A673 (cell line): ENCODE measurements at regions of chr10 and their contacts with region 1.

Region 1: DNA sequence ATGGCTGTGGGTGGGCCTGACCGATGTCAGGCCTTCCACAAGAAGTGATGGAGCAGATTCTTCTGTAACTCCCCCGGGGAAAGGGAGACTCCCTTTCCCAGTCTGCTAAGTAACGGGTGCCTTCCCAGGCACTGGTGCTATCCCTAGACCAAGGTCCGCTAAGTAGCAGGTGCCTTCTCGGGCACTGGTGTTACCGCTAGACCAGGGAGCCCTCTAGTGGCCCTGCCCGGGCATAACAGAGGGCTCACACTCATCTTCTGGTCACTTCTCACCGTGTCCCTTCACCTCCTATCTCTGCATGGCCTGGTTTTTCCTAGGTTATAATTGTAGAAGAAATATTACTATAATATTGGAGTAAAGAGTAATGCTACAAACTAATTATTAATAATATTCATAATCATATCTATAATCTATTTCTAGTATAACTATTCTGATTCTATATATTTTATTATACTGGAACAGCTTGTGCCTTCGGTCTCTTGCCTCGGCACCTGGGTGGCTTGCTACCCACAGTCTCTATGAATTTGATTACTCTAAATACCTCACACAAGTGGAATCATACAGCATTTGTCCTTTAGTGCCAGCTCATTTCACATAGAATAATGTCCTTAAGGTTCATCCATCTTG is 1378.7 kb downstream of the XPNPEP1 start:
- DNase-seq: peak; percentile 67
- H3K4me3 ChIP-seq: no peak overlapping the region
- H3K27ac ChIP-seq: no peak overlapping the region
- H3K4me1 ChIP-seq: no peaks in the 10 kb centered on the region
- H3K27me3 ChIP-seq: no peaks in the 10 kb centered on the region
- CTCF ChIP-seq: peak; percentile 89

Region 2: GRCh38 chr10:106705681-106706100 is 1838.9 kb before region 1 on chr10:
- CTCF ChIA-PET with region 1: no interaction called
- POLR2A ChIA-PET with region 1: no interaction called
- intact Hi-C with region 1: loop called (anchors 10 kb)
- DNase-seq: peak; percentile 81
- H3K4me3 ChIP-seq: no peak overlapping the region
- H3K27ac ChIP-seq: no peak overlapping the region
- H3K4me1 ChIP-seq: no peaks in the 10 kb centered on the region
- H3K27me3 ChIP-seq: no peaks in the 10 kb centered on the region
- CTCF ChIP-seq: peak; percentile 93

Region 3: DNA sequence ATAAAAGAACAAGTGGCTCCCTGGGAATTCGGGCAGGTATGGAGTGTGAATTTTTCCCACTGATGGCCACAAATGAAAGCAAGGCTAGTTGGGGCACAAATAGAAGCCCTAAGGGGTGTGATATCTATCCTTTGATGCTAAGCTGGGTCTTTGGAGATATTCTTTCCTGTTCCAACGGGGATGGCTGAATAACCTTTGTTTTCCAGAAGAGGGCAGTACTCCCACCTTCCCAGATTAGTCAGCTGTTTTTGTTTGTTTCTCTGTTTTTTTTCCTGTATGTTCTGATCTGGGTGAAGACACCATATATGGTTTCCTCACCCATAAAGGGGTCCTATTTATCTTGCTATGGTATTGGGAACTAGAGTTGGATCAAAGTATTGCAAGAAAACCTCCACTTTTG is 432.4 kb before region 1 on chr10:
- CTCF ChIA-PET with region 1: no interaction called
- POLR2A ChIA-PET with region 1: no interaction called
- intact Hi-C with region 1: loop called (anchors 1 kb)
- DNase-seq: peak; percentile 34
- H3K4me3 ChIP-seq: no peak overlapping the region
- H3K27ac ChIP-seq: no peak overlapping the region
- H3K4me1 ChIP-seq: no peaks in the 10 kb centered on the region
- H3K27me3 ChIP-seq: no peaks in the 10 kb centered on the region
- CTCF ChIP-seq: peak; percentile 64

Region 4: GRCh38 chr10:108204479-108205305 is 339.9 kb before region 1 on chr10:
- CTCF ChIA-PET with region 1: no interaction called
- POLR2A ChIA-PET with region 1: no interaction called
- intact Hi-C with region 1: loop called (anchors 5 kb)
- DNase-seq: peak; percentile 62
- H3K4me3 ChIP-seq: no peak overlapping the region
- H3K27ac ChIP-seq: no peak overlapping the region
- H3K4me1 ChIP-seq: no peaks in the 10 kb centered on the region
- H3K27me3 ChIP-seq: no peaks in the 10 kb centered on the region
- CTCF ChIP-seq: peak; percentile 94

Region 5: DNA sequence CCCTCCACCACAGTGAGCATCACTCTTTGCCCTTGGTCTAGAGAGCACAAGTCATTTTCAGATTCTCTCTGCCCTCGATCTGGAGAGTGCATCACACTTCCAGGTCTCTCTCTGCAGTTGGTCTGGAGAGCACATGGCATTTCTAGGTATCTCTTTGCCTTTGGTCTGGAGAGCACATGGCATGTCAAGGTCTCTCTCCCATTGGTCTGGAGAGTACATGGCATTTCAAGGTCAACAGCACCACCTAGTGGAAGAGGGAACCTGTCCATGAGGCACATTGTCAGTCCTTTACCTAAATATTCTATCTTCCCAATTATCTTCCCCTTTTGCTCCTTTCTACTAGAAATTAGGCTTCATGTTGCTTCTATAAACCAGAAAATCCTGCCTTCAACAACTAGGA is 239.3 kb after region 1 on chr10:
- CTCF ChIA-PET with region 1: no interaction called
- POLR2A ChIA-PET with region 1: no interaction called
- intact Hi-C with region 1: loop called (anchors 10 kb)
- DNase-seq: peak; percentile 82
- H3K4me3 ChIP-seq: no peak overlapping the region
- H3K27ac ChIP-seq: no peak overlapping the region
- H3K4me1 ChIP-seq: no peaks in the 10 kb centered on the region
- H3K27me3 ChIP-seq: no peaks in the 10 kb centered on the region
- CTCF ChIP-seq: peak; percentile 68

Region 6: DNA sequence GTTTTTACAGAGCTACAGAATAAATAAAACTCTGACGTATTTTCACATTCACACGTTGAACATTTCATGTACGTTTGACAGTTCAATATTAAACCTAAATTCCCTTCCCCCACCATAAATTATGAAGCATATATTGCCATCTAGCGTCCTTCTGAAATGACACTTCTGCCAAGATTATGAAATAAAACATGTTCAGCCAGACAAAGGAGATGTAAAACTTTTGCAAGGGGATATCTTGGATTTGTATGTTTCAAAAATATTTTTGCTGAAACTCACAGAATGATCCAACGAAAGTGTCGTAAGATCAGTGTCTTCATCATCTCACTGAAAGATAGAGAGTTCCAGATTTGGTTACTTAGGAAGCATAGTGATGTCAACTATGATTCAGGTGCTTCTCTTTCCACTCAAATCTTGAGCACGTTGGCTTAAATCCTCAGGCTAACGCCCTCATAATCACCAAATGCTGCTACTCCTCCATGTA is 474.4 kb after region 1 on chr10:
- CTCF ChIA-PET with region 1: no interaction called
- POLR2A ChIA-PET with region 1: no interaction called
- intact Hi-C with region 1: loop called (anchors 10 kb)
- DNase-seq: peak; percentile 43
- H3K4me3 ChIP-seq: no peak overlapping the region
- H3K27ac ChIP-seq: no peak overlapping the region
- H3K4me1 ChIP-seq: peaks cover 7% of the 10 kb centered on the region
- H3K27me3 ChIP-seq: no peaks in the 10 kb centered on the region
- CTCF ChIP-seq: peak; percentile 58

Region 7: DNA sequence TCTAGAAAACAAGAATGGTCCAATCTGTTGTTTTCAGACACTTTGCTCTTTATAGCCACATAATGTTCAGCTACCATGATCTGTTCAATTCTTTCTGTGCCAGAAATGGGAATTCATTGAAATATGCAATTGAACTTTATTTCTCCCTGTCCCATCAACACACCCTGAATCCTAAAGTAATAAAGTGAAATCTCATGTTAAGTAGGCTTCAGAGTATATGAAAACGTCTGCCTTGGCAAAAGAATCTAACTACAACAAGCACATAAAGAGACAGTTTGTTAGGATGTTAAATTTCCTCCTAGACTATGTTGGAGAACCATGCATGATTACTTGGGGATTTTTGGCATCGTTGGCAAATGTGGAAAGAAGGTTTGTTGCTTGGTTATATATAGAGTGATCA is 656.0 kb after region 1 on chr10:
- CTCF ChIA-PET with region 1: no interaction called
- POLR2A ChIA-PET with region 1: no interaction called
- intact Hi-C with region 1: no loop called
- DNase-seq: no peak
- H3K4me3 ChIP-seq: no peak overlapping the region
- H3K27ac ChIP-seq: peak overlapping the region; percentile 33
- H3K4me1 ChIP-seq: peaks cover 25% of the 10 kb centered on the region
- H3K27me3 ChIP-seq: no peaks in the 10 kb centered on the region
- CTCF ChIP-seq: no peak

Region 8: DNA sequence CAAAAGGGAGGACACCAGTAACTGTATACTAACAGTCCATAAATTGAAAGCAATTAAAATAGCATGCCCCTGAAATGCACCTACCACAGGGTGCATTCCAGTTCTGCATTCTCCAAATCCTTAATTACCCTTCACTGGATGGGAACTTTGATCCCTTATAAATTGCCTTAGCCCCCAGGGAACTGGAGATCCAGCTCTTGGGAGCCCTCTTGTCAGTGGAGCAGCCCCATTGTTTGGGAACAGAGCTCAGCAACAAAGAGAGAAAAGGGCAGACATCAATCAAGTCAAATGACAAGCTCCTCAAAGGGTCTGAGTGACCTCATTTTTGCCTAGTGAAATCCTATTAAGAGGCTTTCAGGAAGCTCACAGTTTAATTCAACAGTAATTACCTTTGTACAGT is 906.1 kb after region 1 on chr10:
- CTCF ChIA-PET with region 1: no interaction called
- POLR2A ChIA-PET with region 1: no interaction called
- intact Hi-C with region 1: no loop called
- DNase-seq: peak; percentile 82
- H3K4me3 ChIP-seq: no peak overlapping the region
- H3K27ac ChIP-seq: no peak overlapping the region
- H3K4me1 ChIP-seq: peaks cover 42% of the 10 kb centered on the region
- H3K27me3 ChIP-seq: no peaks in the 10 kb centered on the region
- CTCF ChIP-seq: no peak

Region 9: GRCh38 chr10:109852475-109853037 is 1307.9 kb after region 1 on chr10:
- CTCF ChIA-PET with region 1: no interaction called
- POLR2A ChIA-PET with region 1: no interaction called
- intact Hi-C with region 1: loop called (anchors 1 kb)
- DNase-seq: peak; percentile 89
- H3K4me3 ChIP-seq: no peak overlapping the region
- H3K27ac ChIP-seq: no peak overlapping the region
- H3K4me1 ChIP-seq: peaks cover 3% of the 10 kb centered on the region
- H3K27me3 ChIP-seq: no peaks in the 10 kb centered on the region
- CTCF ChIP-seq: peak; percentile 97